ENCODE measurements at regions of chr11 and their contacts with region 1.

Region 1: DNA sequence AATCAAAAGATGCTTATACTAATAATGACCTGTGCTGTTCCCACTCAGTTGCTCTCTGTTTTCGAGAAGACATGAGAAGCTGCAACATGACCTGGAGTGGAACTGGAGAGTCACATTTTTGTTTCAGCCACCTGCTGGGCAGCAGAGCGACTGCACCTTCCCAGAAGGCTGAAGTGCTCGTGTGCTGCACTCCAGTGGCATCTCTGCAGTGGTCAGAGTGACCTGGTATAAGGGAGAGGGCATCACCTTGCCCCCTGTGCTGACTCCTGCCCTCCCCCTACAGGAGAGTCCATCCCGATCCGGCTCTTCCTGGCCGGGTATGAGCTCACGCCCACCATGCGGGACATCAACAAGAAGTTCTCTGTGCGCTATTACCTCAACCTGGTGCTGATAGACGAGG is 8.5 kb downstream of the THYN1 start:
- DNase-seq: peak; percentile 35
- ATAC-seq: peak; percentile 93
- H3K4me3 ChIP-seq: no peak overlapping the region
- H3K27ac ChIP-seq: no peak overlapping the region
- H3K4me1 ChIP-seq: no peaks in the 10 kb centered on the region
- H3K27me3 ChIP-seq: no peaks in the 10 kb centered on the region
- CTCF ChIP-seq: peak; percentile 49
- EP300 ChIP-seq: no peak
- POLR2A ChIP-seq: no peak
- RAD21 ChIP-seq: peak; percentile 76

Region 2: DNA sequence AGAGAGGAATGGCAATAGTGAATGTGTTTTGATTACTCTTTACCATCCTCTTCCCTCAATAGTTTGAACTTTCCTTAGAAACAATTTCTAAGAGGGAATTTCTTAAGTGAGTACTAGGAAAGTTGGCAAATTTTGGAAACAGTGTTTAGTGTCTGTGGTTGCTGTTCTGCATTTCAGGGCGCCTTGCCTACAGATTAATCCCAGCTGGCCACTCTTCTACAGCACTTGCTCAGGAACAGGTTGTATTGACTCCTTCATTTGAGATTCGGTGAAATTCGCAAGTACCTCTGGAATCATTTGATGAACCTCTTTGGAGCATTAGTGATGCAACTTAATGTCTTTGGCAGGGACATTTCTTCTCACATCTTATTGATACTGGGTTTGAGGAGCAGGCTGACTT is 147.5 kb before region 1 on chr11:
- CTCF ChIA-PET with region 1: no interaction called
- POLR2A ChIA-PET with region 1: no interaction called
- in situ Hi-C with region 1: no loop called
- intact Hi-C with region 1: no loop called
- DNase-seq: no peak
- ATAC-seq: no peak
- H3K4me3 ChIP-seq: no peak overlapping the region
- H3K27ac ChIP-seq: no peak overlapping the region
- H3K4me1 ChIP-seq: no peaks in the 10 kb centered on the region
- H3K27me3 ChIP-seq: no peaks in the 10 kb centered on the region; a peak in 1 of 5 replicates
- CTCF ChIP-seq: no peak
- EP300 ChIP-seq: no peak
- POLR2A ChIP-seq: no peak
- RAD21 ChIP-seq: no peak

Region 3: GRCh38 chr11:134196756-134197155 is 47.9 kb before region 1 on chr11:
- CTCF ChIA-PET with region 1: no interaction called
- POLR2A ChIA-PET with region 1: no interaction called
- in situ Hi-C with region 1: no loop called
- intact Hi-C with region 1: no loop called
- DNase-seq: no peak
- ATAC-seq: no peak
- H3K4me3 ChIP-seq: no peak overlapping the region
- H3K27ac ChIP-seq: no peak overlapping the region
- H3K4me1 ChIP-seq: no peaks in the 10 kb centered on the region
- H3K27me3 ChIP-seq: no peaks in the 10 kb centered on the region
- CTCF ChIP-seq: no peak
- EP300 ChIP-seq: no peak
- POLR2A ChIP-seq: no peak
- RAD21 ChIP-seq: no peak

Region 4: GRCh38 chr11:134207538-134208239 is 37.0 kb before region 1 on chr11:
- CTCF ChIA-PET with region 1: interaction called, 15 read pairs
- POLR2A ChIA-PET with region 1: no interaction called
- in situ Hi-C with region 1: no loop called
- intact Hi-C with region 1: loop called (anchors 1 kb)
- DNase-seq: peak; percentile 9
- ATAC-seq: peak; percentile 51
- H3K4me3 ChIP-seq: no peak overlapping the region
- H3K27ac ChIP-seq: no peak overlapping the region
- H3K4me1 ChIP-seq: peaks cover under 1% of the 10 kb centered on the region; the same call in 1 of the 2 replicates
- H3K27me3 ChIP-seq: no peaks in the 10 kb centered on the region
- CTCF ChIP-seq: peak; percentile 77
- EP300 ChIP-seq: no peak
- POLR2A ChIP-seq: no peak
- RAD21 ChIP-seq: peak; percentile 43; the same call in 1 of the 2 replicates

Measured in HepG2 (cell line).